ENCODE measurements at regions of chr2 and their contacts with region 1.

Region 1: DNA sequence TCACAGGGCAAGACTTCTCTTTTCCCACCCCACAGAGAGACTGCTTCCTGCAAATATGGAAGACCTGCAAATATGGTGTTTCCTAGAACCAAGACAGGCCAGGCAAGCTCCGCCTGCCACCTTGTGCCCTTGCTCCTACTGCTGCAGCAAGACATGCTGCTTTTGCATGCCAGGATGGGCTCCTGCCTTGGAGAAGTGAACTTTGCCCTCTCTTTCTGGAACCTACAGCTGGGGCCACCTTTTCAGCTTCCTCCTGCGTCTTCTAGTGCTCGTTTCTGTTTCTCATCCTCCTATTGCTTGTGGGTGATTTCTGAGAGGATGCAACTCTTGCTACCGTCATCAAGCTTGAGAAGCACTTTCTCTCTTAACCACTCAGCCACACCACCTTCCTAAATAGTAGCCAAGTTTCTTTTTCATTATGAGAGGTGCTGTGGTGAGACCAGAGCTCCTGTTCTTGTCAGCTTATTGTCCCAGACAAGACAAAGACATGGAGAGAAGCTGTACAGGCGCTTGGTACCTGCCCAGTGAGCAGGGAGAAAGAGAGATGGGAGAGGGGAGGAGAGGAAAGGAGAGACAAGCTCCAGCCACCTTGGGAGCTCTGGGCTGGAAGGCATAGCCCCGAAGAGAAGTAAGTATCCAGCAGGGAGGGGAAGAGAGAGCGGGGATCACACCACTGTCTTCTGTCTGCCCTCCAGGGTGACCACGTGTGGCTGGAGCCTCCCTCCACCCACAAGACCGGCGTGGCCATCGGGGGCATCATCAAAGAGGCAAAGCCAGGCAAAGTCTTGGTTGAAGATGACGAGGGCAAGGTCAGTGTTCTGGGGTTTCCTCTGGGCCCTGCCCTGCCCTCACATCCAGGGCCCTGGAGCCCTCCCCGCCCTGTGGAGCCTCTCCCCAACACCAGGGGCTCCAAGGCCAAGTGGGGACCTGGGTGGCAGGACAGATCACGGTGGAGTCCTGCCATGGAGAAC is 28.3 kb downstream of the MYO7B start:
- DNase-seq: no peak
- H3K4me3 ChIP-seq: no peak overlapping the region
- H3K27ac ChIP-seq: no peak overlapping the region
- H3K4me1 ChIP-seq: no peaks in the 10 kb centered on the region
- H3K27me3 ChIP-seq: peaks cover 5 to 8% of the 10 kb centered on the region in 2 experiments
- CTCF ChIP-seq: no peak
- POLR2A ChIP-seq: no peak

Region 2: DNA sequence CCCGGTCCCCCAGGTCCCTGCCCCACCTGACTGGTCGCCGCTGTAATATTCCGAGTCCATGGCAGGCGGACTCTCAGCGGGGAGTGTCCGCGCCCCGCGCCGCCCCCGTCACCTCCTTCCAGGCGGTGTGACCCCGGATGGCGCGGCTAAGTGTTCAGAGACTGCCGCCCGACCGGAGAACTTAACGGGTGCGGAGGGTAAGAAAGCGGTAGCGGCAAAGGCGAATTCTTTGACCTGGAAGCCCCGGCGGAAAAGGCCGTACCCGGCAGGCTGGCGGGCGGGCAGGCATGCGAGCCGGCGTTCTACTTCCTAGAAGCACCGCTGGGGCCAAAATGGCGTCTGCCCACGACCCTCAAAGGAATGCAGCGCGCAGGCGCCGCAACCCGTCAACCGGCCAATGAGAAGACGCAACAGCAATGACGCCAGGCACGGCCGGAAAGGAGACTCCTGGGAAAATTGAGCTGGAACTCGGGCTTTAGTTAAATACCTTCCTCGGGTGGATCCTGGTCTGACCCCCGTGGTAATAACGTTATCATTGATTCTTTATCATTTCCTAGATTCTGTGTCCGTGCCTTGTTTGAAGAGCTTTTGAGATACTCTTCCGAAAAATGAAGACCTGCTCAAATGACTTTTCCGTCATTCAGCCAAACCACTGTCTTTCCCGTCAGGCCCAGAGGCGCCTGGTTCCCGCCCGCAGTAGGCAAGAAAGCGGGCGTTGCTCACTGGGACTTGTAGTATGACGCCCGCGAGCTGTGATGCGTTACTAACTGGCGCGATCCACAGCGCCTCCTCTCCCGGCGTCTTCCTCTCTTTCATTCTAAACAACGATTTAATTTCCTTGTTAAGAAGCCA is 37.4 kb before region 1 on chr2 and contains the start of gene IWS1:
- CTCF ChIA-PET with region 1: no interaction called
- POLR2A ChIA-PET with region 1: no interaction called
- dilution Hi-C with region 1: no loop called
- intact Hi-C with region 1: no loop called
- DNase-seq: peak; percentile 98
- H3K4me3 ChIP-seq: peak within 1 kb of the TSS; percentile 78 to 92 (median 88)
- H3K27ac ChIP-seq: peak within 1 kb of the TSS; percentile 100
- H3K4me1 ChIP-seq: peaks cover 11% of the 10 kb centered on the region
- H3K27me3 ChIP-seq: no peaks in the 10 kb centered on the region
- CTCF ChIP-seq: peak in 1 of 2 donors; percentile 14
- POLR2A ChIP-seq: peak; percentile 88
- total RNA-seq, gene IWS1: 44.9 and 51.0 TPM in 2 replicates

Region 3: DNA sequence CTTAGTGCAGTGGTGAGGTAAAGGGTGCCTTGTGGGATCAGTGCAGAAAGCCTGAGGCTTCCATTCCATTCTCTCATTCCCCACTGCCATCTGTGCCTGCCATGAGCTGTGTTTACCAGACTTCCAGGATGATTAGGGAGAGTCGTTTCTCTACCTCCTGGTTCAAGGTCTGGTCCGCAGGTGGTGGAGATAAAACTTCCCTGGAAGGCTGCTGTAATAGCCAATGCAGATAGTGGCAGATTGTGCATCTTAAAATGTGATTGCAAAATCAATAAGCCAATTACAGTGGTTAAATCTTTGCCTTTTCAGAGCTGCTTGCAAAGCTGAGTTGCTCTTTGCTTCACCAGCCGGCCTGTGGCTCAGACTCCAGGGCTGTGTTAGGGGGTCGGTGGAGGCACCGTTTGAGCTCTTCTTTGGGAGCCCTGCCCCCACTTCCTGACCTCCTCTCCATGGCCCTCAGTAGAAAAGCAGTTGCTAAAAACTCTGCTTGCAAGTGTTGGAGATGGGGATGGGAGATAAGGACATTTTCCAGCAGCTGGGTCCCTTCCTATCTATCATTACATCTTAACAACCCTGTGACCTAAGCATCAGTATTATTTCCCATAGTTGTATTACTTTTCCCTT is 850.1 kb after region 1 on chr2:
- CTCF ChIA-PET with region 1: no interaction called
- POLR2A ChIA-PET with region 1: no interaction called
- dilution Hi-C with region 1: no loop called
- intact Hi-C with region 1: loop called (anchors 5 kb)
- DNase-seq: no peak
- H3K4me3 ChIP-seq: no peak overlapping the region
- H3K27ac ChIP-seq: no peak overlapping the region
- H3K4me1 ChIP-seq: peaks cover 4% of the 10 kb centered on the region
- H3K27me3 ChIP-seq: no peaks in the 10 kb centered on the region
- CTCF ChIP-seq: no peak
- POLR2A ChIP-seq: no peak